IMR-90 (cell line): ENCODE measurements at regions of chr4 and their contacts with region 1.

Region 1: GRCh38 chr4:102620697-102621497 is 119.7 kb downstream of the NFKB1 start:
- DNase-seq: peak; percentile 82
- ATAC-seq: peak; percentile 89
- H3K4me3 ChIP-seq: peak overlapping the region; percentile 2; the same call in 1 of the 2 replicates
- H3K27ac ChIP-seq: no peak overlapping the region
- H3K4me1 ChIP-seq: peaks cover 7% of the 10 kb centered on the region
- H3K27me3 ChIP-seq: no peaks in the 10 kb centered on the region
- CTCF ChIP-seq: peak; percentile 72
- POLR2A ChIP-seq: no peak
- RAD21 ChIP-seq: peak; percentile 84

Region 2: GRCh38 chr4:102449751-102450352 is 171.0 kb before region 1 on chr4:
- CTCF ChIA-PET with region 1: interaction called, 3 read pairs
- POLR2A ChIA-PET with region 1: no interaction called
- dilution Hi-C with region 1: no loop called
- in situ Hi-C with region 1: no loop called
- intact Hi-C with region 1: loop called (anchors 1 kb)
- DNase-seq: peak; percentile 64
- ATAC-seq: peak; percentile 68
- H3K4me3 ChIP-seq: no peak overlapping the region
- H3K27ac ChIP-seq: no peak overlapping the region
- H3K4me1 ChIP-seq: no peaks in the 10 kb centered on the region
- H3K27me3 ChIP-seq: no peaks in the 10 kb centered on the region
- CTCF ChIP-seq: peak; percentile 70
- POLR2A ChIP-seq: no peak
- RAD21 ChIP-seq: peak; percentile 82

Region 3: GRCh38 chr4:102826890-102827673 is 206.2 kb after region 1 on chr4 and contains the start of gene UBE2D3:
- CTCF ChIA-PET with region 1: interaction called, 5 read pairs
- POLR2A ChIA-PET with region 1: no interaction called
- dilution Hi-C with region 1: no loop called
- in situ Hi-C with region 1: no loop called
- intact Hi-C with region 1: loop called (anchors 1 kb)
- DNase-seq: peak; percentile 97
- ATAC-seq: peak; percentile 60
- H3K4me3 ChIP-seq: peak within 1 kb of the TSS; percentile 69
- H3K27ac ChIP-seq: peak within 1 kb of the TSS; percentile 97
- H3K4me1 ChIP-seq: peaks cover 4% of the 10 kb centered on the region; the same call in 1 of the 2 replicates
- H3K27me3 ChIP-seq: no peaks in the 10 kb centered on the region
- CTCF ChIP-seq: peak; percentile 14; the same call in 1 of the 2 replicates
- POLR2A ChIP-seq: peak; percentile 89
- RAD21 ChIP-seq: 0 out of 2 replicates have a peak, but pooled peaks have one; percentile 4
- total RNA-seq, gene UBE2D3: 387 and 407 TPM in 2 replicates

Region 4: DNA sequence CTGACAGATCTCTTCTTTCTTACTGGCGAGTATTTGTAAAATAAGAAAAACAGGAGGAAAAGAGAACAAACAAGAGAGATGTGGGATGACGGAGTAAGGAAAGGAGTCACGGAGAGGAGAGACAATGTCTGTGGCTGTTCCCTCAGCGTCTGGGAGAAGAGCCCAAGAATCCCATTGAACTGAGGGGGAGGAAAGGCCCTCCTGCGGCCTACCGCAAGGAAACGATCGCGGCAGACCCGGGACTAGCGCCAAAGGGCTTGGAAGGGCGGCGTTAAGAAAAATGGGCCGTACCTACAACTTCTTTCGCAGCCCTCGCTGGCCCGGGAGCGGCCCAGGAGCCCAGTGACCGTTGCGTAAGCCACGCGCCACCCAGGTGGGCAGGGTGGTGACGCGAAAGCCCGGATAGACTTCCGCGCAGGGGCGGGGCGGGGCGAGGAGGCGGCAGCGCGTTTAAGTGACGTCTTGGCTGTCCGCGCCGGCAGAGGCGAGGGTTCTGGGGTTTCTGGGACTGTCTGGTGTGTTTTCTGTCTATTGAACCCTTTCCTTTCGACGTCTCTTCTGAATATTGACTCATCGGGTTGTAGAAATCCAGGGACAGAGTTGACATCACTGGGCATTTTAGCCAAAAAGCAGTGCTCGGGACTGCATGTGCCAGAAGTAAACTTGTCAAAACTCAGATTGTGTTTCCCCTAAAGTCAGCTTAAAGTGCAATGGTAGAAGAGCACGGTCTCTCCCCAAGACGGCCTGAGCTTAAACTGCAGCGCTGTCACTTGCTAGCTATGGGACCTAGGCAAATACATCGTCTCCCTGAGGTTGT is 398.6 kb after region 1 on chr4 and contains the start of gene SLC9B1:
- CTCF ChIA-PET with region 1: no interaction called
- POLR2A ChIA-PET with region 1: interaction called, 3 read pairs
- dilution Hi-C with region 1: loop called (anchors 25 kb)
- in situ Hi-C with region 1: no loop called
- intact Hi-C with region 1: no loop called
- DNase-seq: peak; percentile 97
- ATAC-seq: peak; percentile 99
- H3K4me3 ChIP-seq: peak within 1 kb of the TSS; percentile 69
- H3K27ac ChIP-seq: peak within 1 kb of the TSS; percentile 84
- H3K4me1 ChIP-seq: peaks cover 4% of the 10 kb centered on the region; the same call in 1 of the 2 replicates
- H3K27me3 ChIP-seq: no peaks in the 10 kb centered on the region
- CTCF ChIP-seq: no peak
- POLR2A ChIP-seq: peak; percentile 73; the same call in 1 of the 2 replicates
- RAD21 ChIP-seq: no peak
- total RNA-seq, gene SLC9B1: 0.18 and 0.28 TPM in 2 replicates

Region 5: DNA sequence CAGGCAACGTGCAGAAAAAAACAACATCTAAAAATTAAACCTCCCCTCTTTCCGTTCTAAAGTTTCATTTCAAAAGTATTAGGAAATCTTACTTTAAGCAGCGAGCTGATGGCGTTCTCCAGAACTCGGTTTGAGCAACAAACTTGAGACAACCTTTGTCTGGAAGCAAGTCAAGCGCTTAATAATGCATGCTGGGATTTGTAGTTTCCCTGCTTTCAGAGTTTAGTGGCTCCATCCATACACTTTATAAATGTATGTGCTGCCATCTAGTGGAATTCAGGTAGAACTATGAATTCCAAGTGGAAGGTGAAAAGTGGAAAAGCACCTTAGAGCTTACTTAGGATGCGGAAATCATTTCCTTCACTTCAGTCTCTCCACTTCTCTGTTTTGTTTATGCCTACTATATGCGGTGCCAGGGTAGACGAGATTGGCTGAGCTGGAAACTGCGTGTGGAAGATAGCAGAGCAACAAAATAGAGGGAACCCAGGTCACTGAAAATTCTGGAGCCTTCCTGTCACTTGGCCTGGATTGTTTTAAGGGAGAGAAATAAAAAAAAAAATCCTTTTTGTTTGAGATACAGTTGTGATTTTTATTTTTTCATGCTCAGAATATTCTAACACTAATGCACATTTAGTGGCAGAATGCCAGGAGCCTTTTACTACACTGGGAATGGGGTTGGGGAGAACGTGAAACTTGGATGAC is 478.9 kb after region 1 on chr4 and contains the start of gene BDH2:
- CTCF ChIA-PET with region 1: interaction called, 3 read pairs
- POLR2A ChIA-PET with region 1: no interaction called
- dilution Hi-C with region 1: no loop called
- in situ Hi-C with region 1: no loop called
- intact Hi-C with region 1: loop called (anchors 1 kb)
- DNase-seq: peak; percentile 97
- ATAC-seq: peak; percentile 90
- H3K4me3 ChIP-seq: peak within 1 kb of the TSS; percentile 50
- H3K27ac ChIP-seq: peak within 1 kb of the TSS; percentile 96
- H3K4me1 ChIP-seq: peaks cover 7% of the 10 kb centered on the region
- H3K27me3 ChIP-seq: no peaks in the 10 kb centered on the region
- CTCF ChIP-seq: peak; percentile 85
- POLR2A ChIP-seq: no peak
- RAD21 ChIP-seq: peak; percentile 79
- total RNA-seq, gene BDH2: 36.4 and 52.2 TPM in 2 replicates